ENCODE measurements at regions of chr3 and their contacts with region 1.

Region 1: DNA sequence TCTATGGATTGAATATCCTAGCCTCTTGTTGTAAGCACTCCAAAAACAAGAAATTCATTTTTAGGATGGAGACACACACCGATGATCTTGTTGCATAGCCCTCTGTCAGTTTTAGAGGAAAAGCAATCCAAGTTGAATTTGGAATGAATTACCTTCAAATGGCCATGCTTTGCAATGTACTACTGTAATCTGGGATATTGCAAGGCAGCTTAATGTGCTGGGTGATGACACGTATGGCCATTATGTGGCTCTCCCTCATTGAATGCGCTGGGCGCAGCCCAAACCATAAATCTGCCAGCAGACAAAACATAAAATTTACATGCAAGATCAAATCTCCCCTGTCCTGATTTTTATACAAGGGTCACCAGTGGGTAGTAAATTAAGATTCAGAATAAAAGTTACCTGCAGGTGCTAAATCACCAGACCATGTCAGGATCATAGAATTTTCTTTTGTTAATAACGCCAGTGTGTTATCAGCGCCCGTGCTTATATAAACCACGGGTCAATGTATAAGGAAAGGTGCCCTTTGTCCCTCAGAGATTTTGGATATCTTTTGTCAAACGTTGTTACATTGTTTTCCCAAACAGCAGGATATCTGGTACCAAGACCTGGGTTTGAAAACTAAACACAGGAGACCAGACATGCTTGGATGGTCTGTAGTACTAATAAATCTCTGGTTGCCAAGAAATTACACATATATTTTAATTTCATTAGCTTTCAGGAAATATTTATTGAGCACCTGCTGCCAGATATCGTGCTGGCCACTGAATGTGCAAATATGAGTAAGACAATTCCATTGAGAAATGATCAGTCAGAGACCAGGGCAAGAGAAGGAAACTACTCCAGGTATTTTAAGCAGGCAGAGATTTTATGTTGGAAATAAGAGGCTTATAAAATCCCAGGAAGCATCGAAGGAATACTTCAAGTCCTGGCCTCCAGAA is 237.1 kb downstream of the EBLN2 start:
- DNase-seq: no peak
- H3K4me3 ChIP-seq: no peak overlapping the region
- CTCF ChIP-seq: no peak

Region 2: DNA sequence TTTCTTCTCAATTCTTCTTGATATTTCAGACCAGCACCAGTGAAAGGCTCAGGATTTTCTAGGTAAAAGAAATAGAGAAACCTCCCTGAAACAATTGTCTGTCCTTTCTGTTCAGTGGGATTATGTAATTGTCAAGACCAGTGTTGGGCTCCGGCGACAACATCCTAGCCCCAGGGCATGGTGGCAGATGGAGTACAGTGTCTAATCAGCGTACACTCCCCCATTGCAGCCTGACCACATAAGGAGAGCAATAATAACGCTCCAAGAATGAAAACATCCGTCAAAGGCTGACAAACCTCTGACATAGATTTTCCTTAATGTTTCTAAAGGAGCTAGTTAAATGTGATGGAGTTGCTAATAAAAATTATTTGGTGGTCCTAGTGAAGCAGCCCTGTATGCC is 92.5 kb before region 1 on chr3:
- in situ Hi-C with region 1: loop called (anchors 5 kb)
- DNase-seq: no peak
- H3K4me3 ChIP-seq: no peak overlapping the region
- CTCF ChIP-seq: no peak

Region 3: DNA sequence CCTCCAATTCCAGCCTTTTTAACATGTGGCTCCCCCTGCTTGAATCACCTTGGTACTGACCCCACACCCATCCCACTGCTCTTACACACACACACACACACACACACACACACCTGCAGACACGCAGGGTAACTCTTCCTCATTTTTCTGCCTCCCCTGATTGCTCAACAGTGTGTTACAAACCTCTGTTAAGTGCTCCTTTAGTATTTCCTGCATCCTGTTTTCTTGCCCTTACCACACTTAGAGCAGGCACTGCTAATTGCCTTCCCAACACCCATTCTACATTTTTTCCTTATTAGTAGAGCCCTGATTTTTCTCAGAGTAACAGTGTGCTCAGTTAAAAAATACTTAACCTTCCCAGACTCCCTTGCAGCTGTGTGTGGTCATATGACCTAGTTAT is 53.1 kb before region 1 on chr3:
- in situ Hi-C with region 1: loop called (anchors 5 kb)
- DNase-seq: no peak
- H3K4me3 ChIP-seq: no peak overlapping the region
- CTCF ChIP-seq: no peak

Region 4: GRCh38 chr3:73351423-73352071 is 53.0 kb after region 1 on chr3:
- in situ Hi-C with region 1: no loop called
- DNase-seq: no peak
- H3K4me3 ChIP-seq: no peak overlapping the region
- CTCF ChIP-seq: no peak

Measured in astrocyte of the cerebellum (primary cell).